CD8-positive, alpha-beta memory T cell (primary cell): ENCODE measurements at regions of chr11 and their contacts with region 1.

Region 1: DNA sequence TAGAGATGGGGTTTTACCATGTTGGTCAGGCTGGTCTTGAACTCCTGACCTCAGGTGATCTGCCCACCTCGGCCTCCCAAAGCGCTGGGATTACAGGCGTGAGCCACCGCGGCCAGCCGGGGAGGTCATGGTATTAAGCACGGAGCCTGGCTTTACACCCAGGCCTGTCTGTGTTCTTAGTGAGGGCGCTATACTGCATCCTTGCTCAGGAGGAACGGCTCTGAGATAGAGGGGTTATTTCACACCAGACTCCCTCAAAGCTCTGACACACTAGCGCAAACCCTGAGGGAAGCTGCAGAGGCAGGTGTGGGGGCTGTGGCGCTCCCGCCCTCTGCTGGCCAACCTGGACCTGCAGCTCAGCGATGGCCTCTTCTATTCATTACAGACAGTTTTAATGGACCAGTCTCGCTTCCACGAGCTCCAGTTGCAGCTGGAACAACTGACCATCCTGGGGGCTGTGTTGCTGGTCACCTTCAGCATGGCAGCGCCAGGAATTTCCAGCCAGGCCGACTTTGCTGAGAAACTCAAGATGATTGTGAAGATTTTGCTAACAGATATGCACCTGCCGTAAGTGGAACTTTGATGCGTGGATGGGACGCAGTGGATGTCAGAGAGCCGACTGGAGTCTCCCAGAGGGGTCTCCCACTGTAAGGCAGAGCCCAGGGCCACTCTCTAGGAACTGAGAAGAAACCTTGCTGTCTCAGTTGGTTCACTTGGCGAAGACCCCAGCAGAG is 26.2 kb downstream of the TCP11L1 start:
- DNase-seq: peak; percentile 50 to 80 (median 59)
- H3K4me3 ChIP-seq: no peak overlapping the region
- H3K4me3 Mint-ChIP-seq: no peak overlapping the region
- H3K27ac ChIP-seq: no peak overlapping the region
- H3K27ac Mint-ChIP-seq: peak overlapping the region in 1 of 8 donors; percentile 24
- H3K4me1 ChIP-seq: peaks cover 22% of the 10 kb centered on the region
- H3K4me1 Mint-ChIP-seq: peaks cover 15 to 31% (median 26%) of the 10 kb centered on the region in 3 donors
- H3K27me3 ChIP-seq: no peaks in the 10 kb centered on the region
- H3K27me3 Mint-ChIP-seq: no peaks in the 10 kb centered on the region

Region 2: DNA sequence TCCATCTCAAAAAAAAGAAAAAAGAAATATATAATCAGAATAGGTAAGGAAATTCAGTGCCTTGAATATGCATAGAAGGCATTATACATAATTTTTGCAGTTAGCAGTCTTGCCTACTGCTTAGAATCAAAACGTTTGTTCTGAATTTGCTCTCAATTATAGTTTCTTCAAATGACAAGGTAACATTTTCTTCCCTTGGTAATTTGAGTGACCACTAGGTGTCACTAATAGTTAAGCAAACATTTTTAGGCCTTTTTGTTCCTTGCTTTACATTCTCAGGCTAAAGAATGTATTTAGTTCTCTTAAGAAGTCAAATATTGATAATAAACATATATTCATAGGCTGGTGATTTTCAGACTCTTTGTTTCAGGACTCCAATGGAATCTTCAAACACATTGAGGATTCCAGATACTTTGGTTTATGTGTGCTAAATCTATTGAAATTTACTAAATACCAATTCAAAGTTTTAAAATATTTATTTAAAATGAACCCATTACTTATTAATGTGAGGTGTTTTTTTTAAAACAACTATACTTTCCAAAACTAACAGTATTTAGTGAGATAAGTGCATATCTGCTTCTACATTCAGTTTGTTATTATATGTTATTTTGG is 105.0 kb before region 1 on chr11:
- CTCF ChIA-PET with region 1: interaction called, 132 read pairs
- POLR2A ChIA-PET with region 1: no interaction called
- DNase-seq: peak in 2 of 5 donors; percentile 29 to 48
- H3K4me3 ChIP-seq: no peak overlapping the region
- H3K4me3 Mint-ChIP-seq: no peak overlapping the region
- H3K27ac ChIP-seq: no peak overlapping the region
- H3K27ac Mint-ChIP-seq: no peak overlapping the region
- H3K4me1 ChIP-seq: no peaks in the 10 kb centered on the region
- H3K4me1 Mint-ChIP-seq: no peaks in the 10 kb centered on the region
- H3K27me3 ChIP-seq: no peaks in the 10 kb centered on the region
- H3K27me3 Mint-ChIP-seq: no peaks in the 10 kb centered on the region

Region 3: DNA sequence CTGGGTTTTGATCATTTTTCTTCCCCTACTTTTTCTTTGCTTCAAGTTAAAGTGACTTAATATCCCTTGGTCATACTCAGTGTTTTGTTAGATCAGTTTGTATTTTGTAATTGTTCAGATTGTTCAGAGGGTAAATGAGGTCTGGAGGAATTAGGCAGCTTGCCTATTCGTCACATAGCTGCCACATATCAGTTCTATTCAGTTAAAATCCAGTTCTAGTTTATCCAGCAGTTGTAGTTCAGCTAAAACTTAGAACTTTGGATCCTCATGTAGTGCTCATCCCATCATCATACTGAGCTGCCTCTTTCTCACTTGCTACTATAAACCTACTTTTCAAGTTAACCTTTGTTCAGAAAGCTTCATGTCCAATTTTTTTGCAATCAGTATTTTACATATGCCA is 97.1 kb before region 1 on chr11:
- CTCF ChIA-PET with region 1: interaction called, 22 read pairs
- POLR2A ChIA-PET with region 1: no interaction called
- DNase-seq: no peak
- H3K4me3 ChIP-seq: no peak overlapping the region
- H3K4me3 Mint-ChIP-seq: no peak overlapping the region
- H3K27ac ChIP-seq: no peak overlapping the region
- H3K27ac Mint-ChIP-seq: peak overlapping the region in 2 of 8 donors; percentile 43 to 69
- H3K4me1 ChIP-seq: no peaks in the 10 kb centered on the region
- H3K4me1 Mint-ChIP-seq: no peaks in the 10 kb centered on the region
- H3K27me3 ChIP-seq: no peaks in the 10 kb centered on the region
- H3K27me3 Mint-ChIP-seq: no peaks in the 10 kb centered on the region

Region 4: GRCh38 chr11:32990481-32990880 is 75.1 kb before region 1 on chr11:
- CTCF ChIA-PET with region 1: no interaction called
- POLR2A ChIA-PET with region 1: no interaction called
- DNase-seq: no peak
- H3K4me3 ChIP-seq: no peak overlapping the region
- H3K4me3 Mint-ChIP-seq: no peak overlapping the region
- H3K27ac ChIP-seq: no peak overlapping the region
- H3K27ac Mint-ChIP-seq: no peak overlapping the region
- H3K4me1 ChIP-seq: no peaks in the 10 kb centered on the region
- H3K4me1 Mint-ChIP-seq: no peaks in the 10 kb centered on the region
- H3K27me3 ChIP-seq: no peaks in the 10 kb centered on the region
- H3K27me3 Mint-ChIP-seq: no peaks in the 10 kb centered on the region

Region 5: GRCh38 chr11:33021937-33022336 is 43.7 kb before region 1 on chr11:
- CTCF ChIA-PET with region 1: interaction called, 11 read pairs
- POLR2A ChIA-PET with region 1: no interaction called
- DNase-seq: no peak
- H3K4me3 ChIP-seq: no peak overlapping the region
- H3K4me3 Mint-ChIP-seq: no peak overlapping the region
- H3K27ac ChIP-seq: no peak overlapping the region
- H3K27ac Mint-ChIP-seq: peak overlapping the region in 1 of 8 donors; percentile 83
- H3K4me1 ChIP-seq: peaks cover 12% of the 10 kb centered on the region
- H3K4me1 Mint-ChIP-seq: peaks cover 0 to 13% (median 2%) of the 10 kb centered on the region in 3 donors
- H3K27me3 ChIP-seq: no peaks in the 10 kb centered on the region
- H3K27me3 Mint-ChIP-seq: peaks cover 19 to 36% of the 10 kb centered on the region in 2 donors

Region 6: GRCh38 chr11:33039274-33040032 is 26.2 kb before region 1 on chr11 and contains the start of gene TCP11L1:
- CTCF ChIA-PET with region 1: interaction called, 19 read pairs
- POLR2A ChIA-PET with region 1: no interaction called
- DNase-seq: peak; percentile 47 to 89 (median 79)
- H3K4me3 ChIP-seq: peak within 1 kb of the TSS; percentile 96
- H3K4me3 Mint-ChIP-seq: peak within 1 kb of the TSS; percentile 94 to 98 (median 95)
- H3K27ac ChIP-seq: peak within 1 kb of the TSS; percentile 78
- H3K27ac Mint-ChIP-seq: peak within 1 kb of the TSS; percentile 92 to 98 (median 94)
- H3K4me1 ChIP-seq: peaks cover 10% of the 10 kb centered on the region
- H3K4me1 Mint-ChIP-seq: peaks cover 16 to 23% (median 23%) of the 10 kb centered on the region in 3 donors
- H3K27me3 ChIP-seq: no peaks in the 10 kb centered on the region
- H3K27me3 Mint-ChIP-seq: peaks cover 5 to 11% of the 10 kb centered on the region in 2 donors
- total RNA-seq, gene TCP11L1: 22.1 to 22.2 TPM